Sciatic nerve (tissue), 2 donors: ENCODE measurements at regions of chr5 and their contacts with region 1.

Region 1: GRCh38 chr5:88459971-88460370 is 191.3 kb upstream of the TMEM161B start:
- DNase-seq: no peak
- ATAC-seq: no peak

Region 2: DNA sequence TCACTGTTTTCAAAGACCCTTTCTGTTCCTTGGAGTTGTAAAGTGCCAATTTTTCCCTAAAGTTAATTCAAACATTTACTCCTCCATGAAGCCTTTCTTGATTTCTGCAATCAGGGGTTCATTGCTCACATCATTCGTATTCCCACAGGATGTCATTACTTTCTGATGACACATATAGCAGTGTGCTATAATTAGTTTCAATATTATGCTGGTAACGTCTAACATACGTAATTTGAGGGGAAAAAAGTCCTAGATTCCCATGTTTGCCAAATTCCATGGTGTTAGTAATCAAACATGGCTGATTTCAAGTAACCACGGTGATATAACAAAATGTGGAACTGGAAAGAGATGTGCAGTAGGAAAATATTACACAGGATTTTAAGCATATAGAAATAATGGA is 891.3 kb after region 1 on chr5:
- intact Hi-C with region 1: no loop called
- DNase-seq: no peak
- ATAC-seq: no peak

Region 3: GRCh38 chr5:90264689-90265544 is 1804.9 kb after region 1 on chr5:
- intact Hi-C with region 1: loop called (anchors 5 kb)
- DNase-seq: peak; percentile 76
- ATAC-seq: peak; percentile 55